Heart left ventricle (tissue), 16 donors: ENCODE measurements at regions of chr2 and their contacts with region 1.

Region 1: GRCh38 chr2:10434886-10435819 is 13.0 kb downstream of the ODC1 start:
- DNase-seq: peak; percentile 70 to 89 (median 74)
- ATAC-seq: peak; percentile 51 to 87 (median 80)
- H3K4me3 ChIP-seq: no peak overlapping the region
- H3K27ac ChIP-seq: no peak overlapping the region
- H3K4me1 ChIP-seq: peaks cover 0 to 20% (median 1%) of the 10 kb centered on the region in 12 donors
- H3K27me3 ChIP-seq: peaks cover 0 to 7% (median 0%) of the 10 kb centered on the region in 9 donors
- CTCF ChIP-seq: peak; percentile 92 to 99 (median 98)
- POLR2A ChIP-seq: no peak

Region 2: GRCh38 chr2:9813312-9814133 is 621.6 kb before region 1 on chr2:
- intact Hi-C with region 1: loop called in 4 of 10 experiments (anchors 10 kb)
- DNase-seq: peak in 4 of 5 donors; percentile 58 to 78 (median 70)
- ATAC-seq: peak; percentile 69 to 90 (median 82)
- H3K4me3 ChIP-seq: peak overlapping the region in 9 of 12 donors; percentile 1 to 37 (median 17)
- H3K27ac ChIP-seq: no peak overlapping the region
- H3K4me1 ChIP-seq: peaks cover 3 to 16% (median 11%) of the 10 kb centered on the region in 12 donors
- H3K27me3 ChIP-seq: no peaks in the 10 kb centered on the region
- CTCF ChIP-seq: peak; percentile 84 to 95 (median 91)
- POLR2A ChIP-seq: no peak

Region 3: DNA sequence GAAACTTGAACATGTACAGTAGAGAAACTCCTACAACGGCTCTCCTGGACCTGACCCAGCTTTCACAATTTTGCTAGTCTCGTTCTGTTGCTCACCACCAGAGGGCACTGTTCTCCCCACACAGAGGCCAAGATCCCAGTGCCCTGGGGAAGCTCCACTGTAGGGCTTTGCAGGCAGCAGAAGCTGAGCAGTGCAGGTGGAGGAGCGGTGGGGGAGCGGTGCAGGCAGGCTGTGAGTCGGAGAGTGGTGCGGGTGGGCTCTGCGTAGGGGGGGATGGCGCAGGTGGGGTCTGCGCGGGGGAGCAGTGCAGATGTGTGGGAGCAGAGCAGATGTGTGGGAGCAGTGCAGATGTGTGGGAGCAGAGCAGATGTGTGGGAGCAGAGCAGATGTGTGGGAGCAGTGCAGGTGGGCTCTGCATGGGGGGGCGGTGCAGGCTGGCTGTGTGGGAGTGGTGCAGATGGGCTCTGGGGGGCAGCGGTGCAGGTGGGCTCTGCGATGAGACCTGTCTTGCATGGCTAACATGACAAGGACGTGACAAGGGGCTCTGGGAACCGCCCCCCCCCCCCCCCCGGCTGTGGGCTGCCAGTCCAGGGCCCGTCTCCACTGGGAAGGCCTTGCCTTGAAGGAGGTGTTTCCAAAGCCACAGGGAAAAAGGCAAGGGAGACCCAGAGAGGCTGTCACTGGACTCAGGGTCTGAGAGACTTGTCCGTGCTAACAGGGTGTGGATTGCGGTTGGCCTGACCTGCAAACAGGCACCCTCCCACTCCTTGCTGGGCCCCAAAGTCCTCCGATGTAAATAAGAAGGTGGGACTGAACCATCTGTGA is 362.3 kb before region 1 on chr2:
- intact Hi-C with region 1: loop called (anchors 1 to 5 kb)
- DNase-seq: peak in 4 of 5 donors; percentile 79 to 88 (median 82)
- ATAC-seq: peak; percentile 76 to 94 (median 92)
- H3K4me3 ChIP-seq: no peak overlapping the region
- H3K27ac ChIP-seq: no peak overlapping the region
- H3K4me1 ChIP-seq: peaks cover 0 to 8% (median 0%) of the 10 kb centered on the region in 12 donors
- H3K27me3 ChIP-seq: peaks cover 0 to 24% (median 0%) of the 10 kb centered on the region in 9 donors
- CTCF ChIP-seq: peak; percentile 78 to 88 (median 83)
- POLR2A ChIP-seq: no peak

Region 4: DNA sequence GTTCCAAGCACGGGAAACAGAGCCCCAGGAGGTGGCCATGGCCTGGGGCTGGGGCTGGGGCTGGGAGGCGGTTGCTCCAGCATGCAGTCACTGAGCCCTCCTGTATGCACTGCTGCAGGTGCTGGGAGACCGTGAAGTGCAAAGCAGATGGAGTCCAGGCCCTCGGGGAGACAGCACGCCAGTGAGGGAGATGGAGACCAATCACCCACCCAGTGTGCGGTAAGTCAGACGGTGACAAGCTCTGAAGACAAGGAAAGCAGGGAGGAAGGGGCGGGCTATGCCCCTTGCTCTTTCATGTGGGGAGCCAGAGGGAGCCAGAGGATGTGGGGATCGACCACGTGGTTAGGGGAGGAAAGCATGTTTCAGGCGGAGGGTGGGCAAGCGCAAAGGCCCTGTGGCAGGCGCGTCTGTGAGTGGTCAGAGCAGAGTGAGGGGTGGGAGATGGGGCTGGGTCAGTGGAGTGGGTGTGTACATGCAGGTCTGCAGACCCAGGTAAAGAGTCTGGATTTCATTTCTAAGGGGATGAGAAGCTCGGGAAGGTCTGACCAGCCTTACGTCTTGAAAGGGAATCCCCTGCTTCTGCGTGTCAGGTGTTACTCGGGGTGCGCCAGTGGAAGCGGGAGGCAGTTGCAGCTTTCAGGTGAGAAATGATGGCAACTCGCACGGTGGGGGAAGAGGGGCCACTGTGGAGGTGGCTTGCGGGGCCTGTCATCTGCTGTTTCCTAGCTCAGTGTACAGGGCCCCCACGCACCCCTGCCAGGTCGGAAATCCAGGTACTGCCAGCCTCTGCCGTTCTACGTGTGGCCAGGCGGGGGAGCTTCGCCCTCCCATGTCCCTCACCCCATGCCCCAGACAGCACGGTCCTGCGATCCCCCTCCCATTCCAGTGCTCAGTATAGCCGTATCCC is 293.2 kb before region 1 on chr2:
- intact Hi-C with region 1: loop called in 3 of 10 experiments (anchors 5 kb)
- DNase-seq: no peak
- ATAC-seq: peak in 3 of 4 donors; percentile 36 to 48 (median 47)
- H3K4me3 ChIP-seq: no peak overlapping the region
- H3K27ac ChIP-seq: no peak overlapping the region
- H3K4me1 ChIP-seq: peaks cover 0 to 15% (median 9%) of the 10 kb centered on the region in 12 donors
- H3K27me3 ChIP-seq: no peaks in the 10 kb centered on the region
- CTCF ChIP-seq: peak; percentile 24 to 65 (median 48)
- POLR2A ChIP-seq: no peak

Region 5: DNA sequence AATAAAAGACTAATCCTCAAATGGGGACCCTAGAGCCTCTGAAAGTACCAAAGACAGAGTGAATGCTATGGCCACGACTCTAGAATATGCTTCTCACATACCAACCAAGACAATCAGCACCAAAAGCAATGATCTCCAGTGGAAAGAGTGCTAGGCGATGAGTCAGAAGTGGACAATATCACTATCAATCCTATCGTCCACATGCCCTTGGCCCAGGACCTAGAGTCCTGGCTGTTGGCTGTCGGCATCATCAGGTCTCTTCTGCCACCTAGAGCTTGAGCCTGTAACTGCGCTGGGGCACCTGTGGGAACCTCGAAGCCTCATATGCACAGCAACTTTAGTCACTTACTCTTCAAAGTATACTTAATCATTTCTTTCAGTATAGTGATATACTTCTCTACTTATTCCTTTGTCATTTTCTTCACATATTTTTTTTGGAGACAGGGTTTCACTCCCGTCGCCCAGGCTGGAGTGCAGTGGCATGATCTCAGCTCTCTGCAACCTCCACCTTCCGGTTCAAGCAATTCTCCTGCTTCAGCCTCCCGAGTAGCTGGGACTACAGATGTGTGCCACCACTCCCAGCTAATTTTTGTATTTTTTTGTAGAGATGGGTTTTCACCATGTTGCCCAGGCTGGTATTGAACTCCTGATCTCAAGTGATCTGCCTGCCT is 224.9 kb after region 1 on chr2:
- intact Hi-C with region 1: loop called in 6 of 10 experiments (anchors 5 to 10 kb)
- DNase-seq: peak in 4 of 5 donors; percentile 28 to 68 (median 50)
- ATAC-seq: peak in 3 of 4 donors; percentile 86 to 93 (median 92)
- H3K4me3 ChIP-seq: no peak overlapping the region
- H3K27ac ChIP-seq: no peak overlapping the region
- H3K4me1 ChIP-seq: peaks cover 0 to 4% (median 0%) of the 10 kb centered on the region in 12 donors
- H3K27me3 ChIP-seq: no peaks in the 10 kb centered on the region
- CTCF ChIP-seq: peak; percentile 62 to 78 (median 73)
- POLR2A ChIP-seq: no peak